GM18951 (cell line): ENCODE measurements at regions of chr20 and their contacts with region 1.

Region 1: DNA sequence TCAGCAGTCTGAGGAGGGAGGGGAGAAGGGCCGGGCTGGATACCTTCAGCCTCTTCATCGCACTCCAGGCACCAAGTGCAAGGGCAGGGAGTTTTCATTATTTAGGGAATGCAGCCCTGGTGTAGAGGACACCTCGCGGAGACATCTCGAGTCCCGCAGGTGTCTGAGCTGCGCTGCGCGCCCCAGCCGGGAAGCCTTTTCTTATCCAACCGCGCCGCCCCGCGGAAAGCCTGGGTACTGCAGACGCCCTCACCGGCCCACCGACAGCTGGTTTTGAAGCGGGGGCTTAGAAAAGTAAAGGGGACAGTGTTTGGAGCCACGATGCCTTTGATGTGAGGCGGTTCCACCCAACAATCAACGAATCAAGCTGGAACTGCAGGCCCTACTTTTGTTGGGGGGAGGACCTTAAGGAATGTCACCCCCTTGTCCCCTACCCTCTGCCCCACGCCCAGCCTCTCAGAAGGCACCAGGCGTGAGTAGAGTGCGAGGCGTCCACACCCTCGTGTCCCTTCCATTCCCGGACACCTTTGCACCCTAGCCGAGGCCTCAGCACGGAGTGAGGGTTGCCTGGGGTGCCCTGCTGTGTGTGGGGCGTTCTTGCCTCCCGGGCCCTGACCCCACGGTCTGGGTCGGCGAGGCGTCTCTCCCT is 8.6 kb downstream of the NKX2-2 start:
- POLR2A ChIP-seq: no peak

Region 2: GRCh38 chr20:20837574-20838021 is 667.7 kb before region 1 on chr20:
- in situ Hi-C with region 1: loop called (anchors 10 kb)
- POLR2A ChIP-seq: no peak

Region 3: DNA sequence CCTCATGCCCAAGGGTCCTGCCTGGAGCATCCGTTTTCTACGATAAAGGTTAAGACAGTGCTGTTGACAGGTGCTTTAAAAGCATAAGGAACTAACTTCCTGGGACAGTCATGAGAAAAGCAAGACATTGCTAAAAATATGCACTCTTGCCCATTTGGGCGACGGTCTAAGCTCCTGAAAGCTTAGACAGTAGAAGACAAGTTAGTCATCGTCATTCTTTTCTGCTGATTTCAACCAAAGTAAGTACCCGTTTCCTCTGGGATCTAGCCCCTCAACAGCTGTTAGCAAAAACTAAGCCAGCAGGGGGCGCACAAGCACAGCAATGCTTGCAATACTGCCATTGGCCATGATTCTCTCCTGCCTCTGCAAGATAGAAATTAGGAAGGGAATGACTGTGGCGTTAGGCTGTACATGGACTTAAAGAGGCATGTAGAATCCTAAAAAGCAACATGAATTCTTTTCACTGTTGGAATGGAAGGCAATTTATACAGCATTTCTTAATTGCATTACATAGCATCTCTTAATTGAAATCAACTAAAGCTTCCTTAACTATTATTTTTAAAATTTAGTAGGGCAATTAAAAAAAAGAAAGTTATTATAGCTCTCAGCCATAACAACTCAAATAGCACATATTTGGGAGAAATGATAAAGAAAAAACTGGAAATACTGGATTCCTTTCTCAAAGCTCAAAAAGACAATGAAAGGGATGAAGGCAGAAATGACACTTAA is 645.0 kb before region 1 on chr20:
- in situ Hi-C with region 1: loop called (anchors 10 kb)
- POLR2A ChIP-seq: no peak

Region 4: GRCh38 chr20:21235484-21236445 is 269.5 kb before region 1 on chr20:
- in situ Hi-C with region 1: loop called (anchors 5 kb)
- POLR2A ChIP-seq: no peak